PC-9 (cell line): ENCODE measurements at regions of chr6 and their contacts with region 1.

Region 1: GRCh38 chr6:1761477-1761877 is 151.8 kb downstream of the FOXC1 start:
- DNase-seq: no peak
- H3K4me3 ChIP-seq: no peak overlapping the region
- H3K27ac ChIP-seq: no peak overlapping the region
- H3K4me1 ChIP-seq: peaks cover 26% of the 10 kb centered on the region
- H3K27me3 ChIP-seq: no peaks in the 10 kb centered on the region
- CTCF ChIP-seq: no peak

Region 2: GRCh38 chr6:1838604-1839213 is 77.2 kb after region 1 on chr6:
- CTCF ChIA-PET with region 1: no interaction called
- POLR2A ChIA-PET with region 1: no interaction called
- intact Hi-C with region 1: loop called (anchors 2 kb)
- DNase-seq: peak in 1 of 2 experiments; percentile 84
- H3K4me3 ChIP-seq: no peak overlapping the region
- H3K27ac ChIP-seq: 0 out of 2 replicates have a peak overlapping the region, but pooled peaks have one; percentile 24
- H3K4me1 ChIP-seq: peaks cover 17% of the 10 kb centered on the region
- H3K27me3 ChIP-seq: no peaks in the 10 kb centered on the region
- CTCF ChIP-seq: no peak